ENCODE measurements at regions of chr15 and their contacts with region 1.

Region 1: GRCh38 chr15:58182460-58183163 is 44.4 kb downstream of the AQP9 start:
- DNase-seq: peak; percentile 73
- H3K4me3 ChIP-seq: no peak overlapping the region
- H3K27ac ChIP-seq: no peak overlapping the region
- H3K4me1 ChIP-seq: no peaks in the 10 kb centered on the region; a peak in 1 of 4 replicates
- H3K27me3 ChIP-seq: peaks cover 8% of the 10 kb centered on the region; the same call in 1 of the 2 replicates
- CTCF ChIP-seq: peak; percentile 75
- EP300 ChIP-seq: no peak
- RAD21 ChIP-seq: peak; percentile 94

Region 2: DNA sequence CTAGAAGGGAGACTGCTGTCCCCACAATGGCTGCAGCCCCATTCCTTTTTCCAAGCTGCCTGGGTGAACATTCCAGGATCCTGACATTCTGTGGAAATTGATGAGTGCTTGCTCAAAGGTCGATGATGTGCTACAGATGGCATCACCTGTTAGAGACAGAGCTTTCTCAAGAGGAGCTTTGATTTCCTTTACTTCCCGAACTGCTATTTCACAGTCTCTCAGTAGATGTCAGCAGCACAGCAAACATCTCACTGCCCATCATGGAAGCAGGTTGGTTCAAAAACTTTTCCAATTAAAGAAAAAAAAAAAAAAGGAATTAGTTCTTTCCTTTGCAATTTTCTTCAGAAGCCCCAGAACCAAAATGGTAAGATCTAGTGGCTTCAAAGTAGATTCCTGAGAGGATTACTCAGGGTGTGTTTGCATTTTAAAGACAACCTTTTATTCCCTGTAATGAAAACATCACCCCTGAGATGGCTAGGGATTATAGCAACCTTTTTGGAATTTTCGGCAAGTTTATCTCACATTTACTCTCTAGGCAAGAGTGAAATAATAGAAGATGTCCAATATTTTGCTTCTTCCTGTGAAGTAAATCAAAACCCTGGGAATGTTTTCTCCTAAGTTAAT is 431.3 kb before region 1 on chr15:
- CTCF ChIA-PET with region 1: interaction called, 23 read pairs
- POLR2A ChIA-PET with region 1: no interaction called
- DNase-seq: peak; percentile 48
- H3K4me3 ChIP-seq: no peak overlapping the region
- H3K27ac ChIP-seq: no peak overlapping the region
- H3K4me1 ChIP-seq: no peaks in the 10 kb centered on the region; a peak in 1 of 4 replicates
- H3K27me3 ChIP-seq: no peaks in the 10 kb centered on the region
- CTCF ChIP-seq: peak; percentile 62
- EP300 ChIP-seq: no peak
- RAD21 ChIP-seq: peak; percentile 85

Region 3: GRCh38 chr15:58159827-58160386 is 22.7 kb before region 1 on chr15:
- CTCF ChIA-PET with region 1: interaction called, 24 read pairs
- POLR2A ChIA-PET with region 1: no interaction called
- DNase-seq: no peak
- H3K4me3 ChIP-seq: no peak overlapping the region
- H3K27ac ChIP-seq: no peak overlapping the region
- H3K4me1 ChIP-seq: no peaks in the 10 kb centered on the region
- H3K27me3 ChIP-seq: no peaks in the 10 kb centered on the region; the same call in 1 of the 2 replicates
- CTCF ChIP-seq: no peak
- EP300 ChIP-seq: no peak
- RAD21 ChIP-seq: no peak

Region 4: GRCh38 chr15:58165661-58166060 is 17.0 kb before region 1 on chr15:
- CTCF ChIA-PET with region 1: interaction called, 32 read pairs
- POLR2A ChIA-PET with region 1: no interaction called
- DNase-seq: no peak
- H3K4me3 ChIP-seq: no peak overlapping the region
- H3K27ac ChIP-seq: no peak overlapping the region
- H3K4me1 ChIP-seq: no peaks in the 10 kb centered on the region; a peak in 2 of 4 replicates
- H3K27me3 ChIP-seq: no peaks in the 10 kb centered on the region; the same call in 1 of the 2 replicates
- CTCF ChIP-seq: no peak
- EP300 ChIP-seq: no peak
- RAD21 ChIP-seq: no peak

Region 5: GRCh38 chr15:58171476-58172057 is 11.0 kb before region 1 on chr15:
- CTCF ChIA-PET with region 1: interaction called, 32 read pairs
- POLR2A ChIA-PET with region 1: no interaction called
- DNase-seq: no peak
- H3K4me3 ChIP-seq: no peak overlapping the region
- H3K27ac ChIP-seq: no peak overlapping the region
- H3K4me1 ChIP-seq: no peaks in the 10 kb centered on the region; a peak in 1 of 4 replicates
- H3K27me3 ChIP-seq: no peaks in the 10 kb centered on the region; the same call in 1 of the 2 replicates
- CTCF ChIP-seq: no peak
- EP300 ChIP-seq: no peak
- RAD21 ChIP-seq: no peak

Region 6: DNA sequence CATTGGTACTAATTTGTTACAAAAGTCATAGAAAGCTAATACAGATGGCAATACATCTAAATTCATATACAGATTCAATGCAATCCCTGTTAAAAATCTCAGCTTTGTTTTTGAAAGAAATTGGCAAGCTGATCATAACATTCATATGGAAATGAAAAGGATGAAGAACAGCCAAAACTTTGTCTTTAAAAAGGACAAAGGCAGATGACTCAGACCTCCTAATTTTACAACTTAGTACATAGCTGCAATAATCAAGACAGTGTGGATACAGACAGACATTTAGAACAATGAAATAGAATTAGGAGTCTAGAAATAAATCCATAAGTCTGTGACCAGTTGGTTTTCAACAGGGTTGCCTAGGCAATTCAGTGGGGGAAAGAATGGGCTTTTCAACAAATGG is 18.9 kb after region 1 on chr15:
- CTCF ChIA-PET with region 1: interaction called, 10 read pairs
- POLR2A ChIA-PET with region 1: no interaction called
- DNase-seq: no peak
- H3K4me3 ChIP-seq: no peak overlapping the region
- H3K27ac ChIP-seq: peak overlapping the region in 1 of 2 experiments; percentile 78; a peak in 2 of 4 replicates
- H3K4me1 ChIP-seq: peaks cover 0 to 16% of the 10 kb centered on the region in 2 experiments; a peak in 3 of 4 replicates
- H3K27me3 ChIP-seq: no peaks in the 10 kb centered on the region
- CTCF ChIP-seq: no peak
- EP300 ChIP-seq: peak; percentile 12 to 36; a peak in 1 of 4 replicates
- RAD21 ChIP-seq: no peak

Region 7: GRCh38 chr15:58227706-58228543 is 45.3 kb after region 1 on chr15:
- CTCF ChIA-PET with region 1: no interaction called
- POLR2A ChIA-PET with region 1: no interaction called
- DNase-seq: peak; percentile 62
- H3K4me3 ChIP-seq: no peak overlapping the region; a peak in 1 of 4 replicates
- H3K27ac ChIP-seq: no peak overlapping the region
- H3K4me1 ChIP-seq: peaks cover 4 to 20% of the 10 kb centered on the region in 2 experiments; a peak in 2 of 4 replicates
- H3K27me3 ChIP-seq: no peaks in the 10 kb centered on the region
- CTCF ChIP-seq: peak; percentile 96
- EP300 ChIP-seq: no peak
- RAD21 ChIP-seq: peak; percentile 98